ENCODE measurements at regions of chr19 and their contacts with region 1.

Region 1: DNA sequence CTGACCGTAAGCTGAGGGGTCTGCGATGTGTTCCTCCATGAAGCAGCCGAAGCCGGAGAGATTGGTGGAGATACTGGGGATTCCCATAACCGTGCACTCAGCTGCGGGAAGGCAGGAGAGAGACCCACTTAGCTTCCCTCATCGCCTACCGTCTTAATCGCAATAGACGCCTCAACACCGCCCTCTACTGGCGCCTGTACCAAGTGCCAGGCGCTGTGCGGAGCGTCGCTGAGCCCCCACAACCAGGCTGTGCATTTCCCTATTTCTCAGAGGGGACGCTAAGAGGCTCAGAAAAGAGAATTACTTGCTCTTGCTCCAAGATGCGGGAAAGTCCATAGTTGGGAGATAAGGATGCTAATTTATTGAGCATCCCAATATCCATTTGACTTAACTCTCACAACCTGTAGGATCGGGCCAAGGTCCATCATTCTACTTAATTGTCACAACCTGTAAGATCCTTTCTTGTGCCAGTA is 5.8 kb downstream of the FTL start:
- DNase-seq: peak; percentile 86 to 88
- ATAC-seq: peak; percentile 25 to 55
- H3K4me3 ChIP-seq: no peak overlapping the region
- H3K27ac ChIP-seq: peak overlapping the region in 1 of 2 experiments; percentile 63; a peak in 3 of 6 replicates
- H3K4me1 ChIP-seq: peaks cover 23% of the 10 kb centered on the region
- CTCF ChIP-seq: peak; percentile 98
- EP300 ChIP-seq: no peak
- POLR2A ChIP-seq: no peak
- RAD21 ChIP-seq: peak; percentile 96 to 97

Region 2: GRCh38 chr19:48795055-48795684 is 175.8 kb before region 1 on chr19:
- CTCF ChIA-PET with region 1: interaction called, 332 read pairs
- POLR2A ChIA-PET with region 1: interaction called, 15 read pairs
- DNase-seq: peak; percentile 96 to 98
- ATAC-seq: peak; percentile 94 to 99
- H3K4me3 ChIP-seq: peak overlapping the region; percentile 43
- H3K27ac ChIP-seq: peak overlapping the region; percentile 64 to 83
- H3K4me1 ChIP-seq: peaks cover 5% of the 10 kb centered on the region; the same call in 2 of the 3 replicates
- CTCF ChIP-seq: peak; percentile 99
- EP300 ChIP-seq: no peak
- POLR2A ChIP-seq: no peak
- RAD21 ChIP-seq: peak; percentile 89 to 98

Region 3: GRCh38 chr19:48872182-48872883 is 98.6 kb before region 1 on chr19 and contains the start of gene PPP1R15A:
- CTCF ChIA-PET with region 1: interaction called, 121 read pairs
- POLR2A ChIA-PET with region 1: interaction called, 175 read pairs
- DNase-seq: peak; percentile 98 to 100
- ATAC-seq: peak; percentile 55 to 58
- H3K4me3 ChIP-seq: peak within 1 kb of the TSS; percentile 92
- H3K27ac ChIP-seq: peak within 1 kb of the TSS; percentile 95 to 97
- H3K4me1 ChIP-seq: peaks cover 40% of the 10 kb centered on the region
- CTCF ChIP-seq: no peak
- EP300 ChIP-seq: no peak
- POLR2A ChIP-seq: peak; percentile 99
- RAD21 ChIP-seq: no peak; a peak in 1 of 5 replicates
- polyA plus RNA-seq, gene PPP1R15A: 49.0 and 74.2 TPM in 2 replicates

Region 4: GRCh38 chr19:48899781-48900476 is 71.0 kb before region 1 on chr19 and contains the start of gene NUCB1:
- CTCF ChIA-PET with region 1: interaction called, 15 read pairs
- POLR2A ChIA-PET with region 1: interaction called, 10 read pairs
- DNase-seq: peak; percentile 99 to 100
- ATAC-seq: peak; percentile 93 to 97
- H3K4me3 ChIP-seq: peak within 1 kb of the TSS; percentile 83
- H3K27ac ChIP-seq: peak within 1 kb of the TSS; percentile 87 to 90
- H3K4me1 ChIP-seq: peaks cover 20% of the 10 kb centered on the region; the same call in 2 of the 3 replicates
- CTCF ChIP-seq: no peak
- EP300 ChIP-seq: no peak
- POLR2A ChIP-seq: peak; percentile 64
- RAD21 ChIP-seq: peak; percentile 36 to 52; a peak in 2 of 5 replicates
- polyA plus RNA-seq, gene NUCB1: 58.5 and 79.5 TPM in 2 replicates

Region 5: GRCh38 chr19:48933382-48933932 is 37.5 kb before region 1 on chr19 and contains the start of gene DHDH:
- CTCF ChIA-PET with region 1: interaction called, 18 read pairs
- POLR2A ChIA-PET with region 1: interaction called, 4 read pairs
- DNase-seq: peak; percentile 81 to 88
- ATAC-seq: peak; percentile 95 to 97
- H3K4me3 ChIP-seq: peak within 1 kb of the TSS; percentile 47
- H3K27ac ChIP-seq: peak within 1 kb of the TSS; percentile 55 to 79
- H3K4me1 ChIP-seq: peaks cover 6% of the 10 kb centered on the region; the same call in 2 of the 3 replicates
- CTCF ChIP-seq: no peak
- EP300 ChIP-seq: no peak
- POLR2A ChIP-seq: peak; percentile 61
- RAD21 ChIP-seq: no peak
- polyA plus RNA-seq, gene DHDH: 0.60 and 0.78 TPM in 2 replicates

Region 6: GRCh38 chr19:48954595-48955310 is 16.2 kb before region 1 on chr19 and contains the start of gene BAX:
- CTCF ChIA-PET with region 1: interaction called, 39 read pairs
- POLR2A ChIA-PET with region 1: interaction called, 47 read pairs
- DNase-seq: peak; percentile 99 to 100
- ATAC-seq: peak; percentile 90 to 92
- H3K4me3 ChIP-seq: peak within 1 kb of the TSS; percentile 83
- H3K27ac ChIP-seq: peak within 1 kb of the TSS; percentile 96 to 97
- H3K4me1 ChIP-seq: peaks cover 15% of the 10 kb centered on the region
- CTCF ChIP-seq: no peak
- EP300 ChIP-seq: no peak
- POLR2A ChIP-seq: peak; percentile 67
- RAD21 ChIP-seq: peak; percentile 31 to 63
- polyA plus RNA-seq, gene BAX: 120 and 134 TPM in 2 replicates

Region 7: GRCh38 chr19:48993175-48994034 is 22.4 kb after region 1 on chr19 and contains the starts of genes GYS1 and RUVBL2:
- CTCF ChIA-PET with region 1: interaction called, 360 read pairs
- POLR2A ChIA-PET with region 1: interaction called, 11 read pairs
- DNase-seq: peak; percentile 100
- ATAC-seq: peak; percentile 89 to 94
- H3K4me3 ChIP-seq: peak within 1 kb of the TSS; percentile 73
- H3K27ac ChIP-seq: peak within 1 kb of the TSS; percentile 76 to 87
- H3K4me1 ChIP-seq: peaks cover 20% of the 10 kb centered on the region
- CTCF ChIP-seq: peak; percentile 82
- EP300 ChIP-seq: no peak
- POLR2A ChIP-seq: peak; percentile 92
- RAD21 ChIP-seq: peak in 1 of 2 experiments; percentile 39; a peak in 2 of 5 replicates
- polyA plus RNA-seq, gene GYS1: 10.3 and 16.4 TPM in 2 replicates
- polyA plus RNA-seq, gene RUVBL2: 146 and 186 TPM in 2 replicates